ENCODE measurements at regions of chr6 and their contacts with region 1.

Region 1: DNA sequence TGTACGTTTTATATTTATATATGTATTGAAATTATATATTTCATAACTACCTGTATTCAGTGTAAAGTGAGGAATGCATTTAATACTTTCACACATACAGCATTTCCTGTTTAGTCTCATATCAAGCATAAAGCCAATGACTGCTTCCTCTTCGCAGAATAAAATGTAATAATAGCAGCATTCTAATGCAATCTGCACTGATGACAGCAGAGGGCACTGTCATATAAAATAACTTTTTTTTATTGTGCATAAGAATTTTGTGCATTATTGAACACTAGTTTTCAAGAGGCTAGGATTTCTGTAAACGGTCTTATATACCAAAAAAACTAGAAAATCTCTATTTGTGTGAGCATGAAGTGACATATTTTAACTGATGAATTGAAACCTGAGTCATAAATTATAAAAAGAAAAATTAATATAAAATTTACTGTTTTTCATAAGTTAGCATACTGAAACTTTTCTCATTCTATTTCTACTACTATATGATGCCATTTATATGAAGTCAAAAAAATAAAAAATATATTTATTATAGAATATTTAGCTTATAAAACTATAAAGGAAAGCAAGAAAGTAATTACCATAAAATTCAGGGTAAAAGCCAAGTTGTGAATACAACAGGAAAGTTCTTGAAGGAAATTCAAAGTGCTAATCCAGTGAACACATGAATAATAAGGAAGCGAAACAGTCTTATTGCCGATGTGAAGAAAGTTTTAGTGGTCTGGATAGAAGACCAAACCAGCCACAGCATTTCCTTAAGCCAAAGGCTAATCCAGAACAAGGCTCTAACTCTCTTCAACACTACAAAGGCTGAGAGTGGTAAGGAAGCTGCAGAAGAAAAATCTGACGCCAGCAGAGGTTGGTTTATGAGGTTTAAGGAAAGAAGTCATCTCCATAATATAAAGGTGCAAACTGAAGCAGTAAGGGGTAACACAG is 36.3 kb downstream of the RNF146 start:
- DNase-seq: peak; percentile 69
- ATAC-seq: peak; percentile 86
- H3K4me3 Mint-ChIP-seq: no peak overlapping the region
- H3K27ac Mint-ChIP-seq: no peak overlapping the region
- H3K4me1 Mint-ChIP-seq: peaks cover 29% of the 10 kb centered on the region
- H3K27me3 Mint-ChIP-seq: no peaks in the 10 kb centered on the region
- CTCF ChIP-seq: peak; percentile 81

Region 2: GRCh38 chr6:127266178-127266891 is 36.7 kb before region 1 on chr6 and contains the start of gene RNF146:
- CTCF ChIA-PET with region 1: interaction called, 12 read pairs
- POLR2A ChIA-PET with region 1: no interaction called
- intact Hi-C with region 1: no loop called
- DNase-seq: peak; percentile 73
- ATAC-seq: peak; percentile 76
- H3K4me3 Mint-ChIP-seq: peak within 1 kb of the TSS; percentile 93
- H3K27ac Mint-ChIP-seq: peak within 1 kb of the TSS; percentile 100
- H3K4me1 Mint-ChIP-seq: peaks cover 30% of the 10 kb centered on the region
- H3K27me3 Mint-ChIP-seq: no peaks in the 10 kb centered on the region
- CTCF ChIP-seq: peak; percentile 84
- total RNA-seq, gene RNF146: 12.5 to 13.2 TPM

Region 3: GRCh38 chr6:127291495-127291894 is 11.5 kb before region 1 on chr6:
- CTCF ChIA-PET with region 1: interaction called, 11 read pairs
- POLR2A ChIA-PET with region 1: no interaction called
- intact Hi-C with region 1: no loop called
- DNase-seq: no peak
- ATAC-seq: peak; percentile 73
- H3K4me3 Mint-ChIP-seq: no peak overlapping the region
- H3K27ac Mint-ChIP-seq: peak overlapping the region; percentile 44
- H3K4me1 Mint-ChIP-seq: peaks cover 44% of the 10 kb centered on the region
- H3K27me3 Mint-ChIP-seq: no peaks in the 10 kb centered on the region
- CTCF ChIP-seq: no peak

Region 4: DNA sequence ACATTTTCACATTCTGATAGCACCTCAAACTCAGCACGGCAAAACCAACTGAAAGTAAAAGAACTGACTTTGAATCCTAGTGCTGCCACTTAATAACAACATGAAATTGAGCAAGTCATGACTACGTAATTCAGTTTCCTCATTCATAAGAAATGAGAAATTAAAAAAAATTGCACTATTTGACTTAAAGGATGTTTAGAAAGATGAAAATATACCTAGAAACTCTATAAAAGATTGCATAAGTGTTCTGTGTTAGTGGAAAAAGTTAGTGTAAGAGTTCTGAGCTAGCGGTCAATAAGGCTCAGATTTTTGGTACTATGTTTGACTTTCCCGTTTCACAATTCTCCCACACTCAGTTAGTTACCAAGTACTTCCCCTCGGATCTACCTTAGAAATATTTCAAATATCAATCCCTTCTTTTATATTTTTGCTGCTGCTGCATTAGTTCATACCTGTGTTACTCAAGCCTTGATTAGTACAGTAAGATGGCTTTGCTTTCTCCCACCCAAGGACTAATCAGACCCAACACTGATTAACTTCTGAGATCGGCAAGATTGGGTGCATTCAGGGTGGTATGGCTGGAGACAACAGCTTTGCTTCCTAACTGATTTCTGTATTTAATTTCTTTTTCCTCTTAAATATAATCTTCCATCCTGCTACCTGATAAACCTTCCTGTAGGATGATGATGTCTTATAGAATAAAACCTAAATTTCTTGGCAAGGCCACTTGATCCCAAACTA is 14.6 kb after region 1 on chr6:
- CTCF ChIA-PET with region 1: interaction called, 15 read pairs
- POLR2A ChIA-PET with region 1: no interaction called
- intact Hi-C with region 1: no loop called
- DNase-seq: no peak
- ATAC-seq: no peak
- H3K4me3 Mint-ChIP-seq: no peak overlapping the region
- H3K27ac Mint-ChIP-seq: no peak overlapping the region
- H3K4me1 Mint-ChIP-seq: peaks cover 16% of the 10 kb centered on the region
- H3K27me3 Mint-ChIP-seq: no peaks in the 10 kb centered on the region
- CTCF ChIP-seq: no peak

Region 5: GRCh38 chr6:127342946-127343808 is 40.2 kb after region 1 on chr6 and contains the start of gene ECHDC1:
- CTCF ChIA-PET with region 1: no interaction called
- POLR2A ChIA-PET with region 1: interaction called, 3 read pairs
- intact Hi-C with region 1: loop called (anchors 5 kb)
- DNase-seq: peak; percentile 86
- ATAC-seq: peak; percentile 90
- H3K4me3 Mint-ChIP-seq: no peak within 1 kb of the TSS
- H3K27ac Mint-ChIP-seq: no peak within 1 kb of the TSS
- H3K4me1 Mint-ChIP-seq: peaks cover 12% of the 10 kb centered on the region
- H3K27me3 Mint-ChIP-seq: no peaks in the 10 kb centered on the region
- CTCF ChIP-seq: no peak
- total RNA-seq, gene ECHDC1: 50.2 to 51.1 TPM

Region 6: DNA sequence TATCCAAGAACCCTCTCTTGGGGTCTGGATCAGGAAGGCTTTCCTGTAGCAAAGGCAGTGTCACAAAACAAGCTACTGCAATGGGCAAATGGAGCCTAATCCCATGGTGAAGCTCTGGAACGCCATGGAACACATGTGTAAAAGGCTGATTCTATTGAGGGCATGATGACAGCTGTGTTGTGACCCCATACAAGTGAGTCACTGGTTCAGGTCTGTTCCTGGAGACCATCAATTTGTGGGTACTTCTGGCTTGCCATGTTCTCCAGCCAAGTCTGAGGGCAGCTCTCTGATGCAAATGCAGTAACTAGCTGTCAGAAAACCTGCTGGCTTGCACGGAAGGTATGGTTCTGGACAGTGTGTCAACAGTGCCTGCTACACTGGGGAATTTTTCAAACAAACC is 73.7 kb after region 1 on chr6:
- CTCF ChIA-PET with region 1: no interaction called
- POLR2A ChIA-PET with region 1: no interaction called
- intact Hi-C with region 1: no loop called
- DNase-seq: no peak
- ATAC-seq: no peak
- H3K4me3 Mint-ChIP-seq: no peak overlapping the region
- H3K27ac Mint-ChIP-seq: no peak overlapping the region
- H3K4me1 Mint-ChIP-seq: no peaks in the 10 kb centered on the region
- H3K27me3 Mint-ChIP-seq: peaks cover 2% of the 10 kb centered on the region
- CTCF ChIP-seq: no peak

Region 7: DNA sequence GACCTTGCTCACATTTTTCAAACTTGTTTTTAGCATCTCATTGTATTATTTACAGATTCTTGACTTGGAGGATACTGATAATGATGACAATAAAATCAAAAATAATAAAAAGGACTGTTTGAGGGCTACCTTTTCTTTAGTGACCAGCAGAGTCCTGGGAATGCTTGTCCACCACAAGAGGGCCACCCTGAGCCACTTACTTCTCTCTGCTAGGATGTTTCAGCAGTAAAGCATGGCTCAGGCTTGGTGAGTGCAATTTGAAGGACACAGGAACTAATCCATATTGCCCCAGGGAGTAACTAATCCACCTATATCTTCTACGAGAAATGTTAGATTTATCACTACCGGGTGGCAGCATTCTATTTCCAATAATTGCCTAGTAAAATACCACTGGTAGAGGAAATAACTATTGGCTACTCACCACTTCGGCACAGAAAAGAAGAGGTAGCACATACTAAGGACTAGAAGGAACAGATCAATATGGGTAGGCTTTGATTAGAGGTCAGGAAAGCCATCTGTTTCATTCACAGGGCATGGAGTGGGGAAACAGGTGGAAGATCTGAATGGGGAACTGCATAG is 162.0 kb after region 1 on chr6:
- CTCF ChIA-PET with region 1: interaction called, 6 read pairs
- POLR2A ChIA-PET with region 1: no interaction called
- intact Hi-C with region 1: loop called (anchors 5 kb)
- DNase-seq: peak; percentile 81
- ATAC-seq: peak; percentile 92
- H3K4me3 Mint-ChIP-seq: no peak overlapping the region
- H3K27ac Mint-ChIP-seq: no peak overlapping the region
- H3K4me1 Mint-ChIP-seq: no peaks in the 10 kb centered on the region
- H3K27me3 Mint-ChIP-seq: no peaks in the 10 kb centered on the region
- CTCF ChIP-seq: peak; percentile 89

Region 8: DNA sequence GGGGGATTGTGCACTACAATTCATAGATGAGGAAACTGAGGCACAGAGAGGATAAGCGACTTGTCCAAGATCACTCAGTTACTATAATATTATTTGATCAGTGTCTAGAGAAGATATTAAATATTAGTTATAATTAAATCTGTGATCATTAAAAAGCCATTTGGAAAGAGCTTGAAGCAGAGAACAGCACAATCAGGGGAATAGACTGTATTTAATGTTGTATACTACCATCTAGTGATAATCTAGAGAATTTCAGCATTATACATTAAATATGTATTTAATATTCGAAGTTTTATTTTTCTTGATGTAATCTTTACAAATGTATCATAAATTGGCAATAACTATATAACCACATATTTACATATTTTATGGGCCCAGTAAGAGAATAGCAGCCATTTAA is 236.3 kb after region 1 on chr6:
- CTCF ChIA-PET with region 1: interaction called, 22 read pairs
- POLR2A ChIA-PET with region 1: no interaction called
- intact Hi-C with region 1: loop called (anchors 2 kb)
- DNase-seq: no peak
- ATAC-seq: peak; percentile 76
- H3K4me3 Mint-ChIP-seq: no peak overlapping the region
- H3K27ac Mint-ChIP-seq: no peak overlapping the region
- H3K4me1 Mint-ChIP-seq: no peaks in the 10 kb centered on the region
- H3K27me3 Mint-ChIP-seq: peaks cover 12% of the 10 kb centered on the region
- CTCF ChIP-seq: peak; percentile 61